ENCODE measurements at regions of chr7 and their contacts with region 1.

Region 1: GRCh38 chr7:136405931-136406777 is 429.0 kb upstream of the MTPN start:
- DNase-seq: peak in 3 of 5 donors; percentile 9 to 29 (median 16)
- ATAC-seq: peak in 3 of 4 donors; percentile 55 to 80 (median 73)
- H3K4me3 ChIP-seq: no peak overlapping the region
- H3K27ac ChIP-seq: no peak overlapping the region
- H3K4me1 ChIP-seq: peaks cover 0 to 5% (median 0%) of the 10 kb centered on the region in 12 donors
- H3K27me3 ChIP-seq: peaks cover 0 to 3% (median 0%) of the 10 kb centered on the region in 9 donors
- CTCF ChIP-seq: peak; percentile 55 to 83 (median 71)
- POLR2A ChIP-seq: no peak

Region 2: DNA sequence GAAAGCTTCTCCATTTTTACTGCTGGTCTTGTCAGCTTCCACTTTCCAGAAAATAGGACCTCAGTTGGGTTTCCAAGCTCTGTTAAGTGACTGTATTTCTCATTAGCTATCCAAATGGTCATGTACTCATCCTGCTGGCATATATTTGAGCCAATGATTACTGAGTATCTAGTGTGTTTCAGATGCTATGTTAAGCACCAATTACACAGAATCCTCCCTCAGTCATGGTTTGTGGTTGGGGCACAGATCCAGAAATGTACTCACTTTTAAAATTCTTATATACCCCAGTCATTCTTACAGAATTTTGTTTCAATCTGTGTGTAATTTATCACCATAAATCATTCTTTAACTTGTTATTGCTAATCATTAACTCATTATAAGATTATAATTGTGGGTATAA is 66.7 kb before region 1 on chr7:
- intact Hi-C with region 1: no loop called
- DNase-seq: no peak
- ATAC-seq: no peak
- H3K4me3 ChIP-seq: no peak overlapping the region
- H3K27ac ChIP-seq: no peak overlapping the region
- H3K4me1 ChIP-seq: no peaks in the 10 kb centered on the region
- H3K27me3 ChIP-seq: no peaks in the 10 kb centered on the region
- CTCF ChIP-seq: no peak
- POLR2A ChIP-seq: no peak

Region 3: GRCh38 chr7:136857573-136857972 is 451.4 kb after region 1 on chr7:
- intact Hi-C with region 1: loop called in 1 of 10 experiments (anchors 5 kb)
- DNase-seq: no peak
- ATAC-seq: no peak
- H3K4me3 ChIP-seq: no peak overlapping the region
- H3K27ac ChIP-seq: no peak overlapping the region
- H3K4me1 ChIP-seq: no peaks in the 10 kb centered on the region
- H3K27me3 ChIP-seq: no peaks in the 10 kb centered on the region
- CTCF ChIP-seq: no peak
- POLR2A ChIP-seq: no peak

Region 4: GRCh38 chr7:137091396-137091795 is 685.2 kb after region 1 on chr7:
- intact Hi-C with region 1: loop called in 1 of 10 experiments (anchors 10 kb)
- DNase-seq: no peak
- ATAC-seq: peak; percentile 47 to 86 (median 77)
- H3K4me3 ChIP-seq: no peak overlapping the region
- H3K27ac ChIP-seq: no peak overlapping the region
- H3K4me1 ChIP-seq: no peaks in the 10 kb centered on the region
- H3K27me3 ChIP-seq: no peaks in the 10 kb centered on the region
- CTCF ChIP-seq: peak in 9 of 12 donors; percentile 13 to 50 (median 33)
- POLR2A ChIP-seq: no peak

Region 5: GRCh38 chr7:137454246-137454724 is 1048.1 kb after region 1 on chr7:
- intact Hi-C with region 1: loop called in 5 of 10 experiments (anchors 5 to 10 kb)
- DNase-seq: no peak
- ATAC-seq: peak in 3 of 4 donors; percentile 54 to 74 (median 66)
- H3K4me3 ChIP-seq: peak overlapping the region in 6 of 12 donors; percentile 13 to 44 (median 20)
- H3K27ac ChIP-seq: peak overlapping the region in 9 of 12 donors; percentile 17 to 75 (median 56)
- H3K4me1 ChIP-seq: peaks cover 0 to 19% (median 6%) of the 10 kb centered on the region in 12 donors
- H3K27me3 ChIP-seq: no peaks in the 10 kb centered on the region
- CTCF ChIP-seq: peak; percentile 53 to 82 (median 66)
- POLR2A ChIP-seq: no peak

Region 6: GRCh38 chr7:137579913-137580640 is 1173.9 kb after region 1 on chr7:
- intact Hi-C with region 1: loop called in 1 of 10 experiments (anchors 10 kb)
- DNase-seq: no peak
- ATAC-seq: peak in 2 of 4 donors; percentile 52 to 74
- H3K4me3 ChIP-seq: no peak overlapping the region
- H3K27ac ChIP-seq: no peak overlapping the region
- H3K4me1 ChIP-seq: peaks cover 0 to 11% (median 0%) of the 10 kb centered on the region in 12 donors
- H3K27me3 ChIP-seq: no peaks in the 10 kb centered on the region
- CTCF ChIP-seq: no peak
- POLR2A ChIP-seq: no peak

Region 7: DNA sequence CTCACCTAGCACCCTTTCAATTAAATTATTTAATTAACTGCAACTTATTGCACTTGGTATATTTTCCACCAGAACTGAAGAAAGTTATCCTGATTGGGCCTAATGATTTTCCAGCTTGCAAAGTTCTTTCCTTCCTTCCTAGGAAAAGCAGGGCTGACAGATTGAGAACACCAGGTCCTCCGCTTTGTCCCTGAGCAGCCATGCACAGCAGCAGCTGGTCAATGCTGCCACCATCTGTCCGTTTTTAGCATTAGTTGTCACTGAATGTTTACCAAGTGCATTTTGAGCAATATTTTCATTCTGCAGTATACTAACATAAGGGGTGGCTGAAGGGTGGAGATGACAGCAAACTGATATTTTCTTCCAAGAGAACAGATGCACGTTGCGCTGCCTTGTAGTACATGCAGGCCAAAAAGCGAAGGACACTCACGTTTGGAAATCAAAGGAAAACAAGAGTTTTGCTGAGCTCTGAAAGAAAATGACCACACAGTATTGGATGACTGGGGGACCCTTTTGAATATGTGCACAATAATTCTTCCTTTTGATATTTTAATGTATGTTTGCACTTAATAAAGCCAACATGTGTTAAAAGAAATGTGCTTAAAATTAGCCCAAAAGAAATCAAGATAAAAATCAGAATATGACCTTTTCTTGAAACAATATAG is 1186.2 kb after region 1 on chr7:
- intact Hi-C with region 1: loop called in 6 of 10 experiments (anchors 5 to 10 kb)
- DNase-seq: peak; percentile 46 to 58 (median 55)
- ATAC-seq: peak in 3 of 4 donors; percentile 80 to 93 (median 82)
- H3K4me3 ChIP-seq: no peak overlapping the region
- H3K27ac ChIP-seq: peak overlapping the region in 1 of 12 donors; percentile 35
- H3K4me1 ChIP-seq: peaks cover 0 to 13% (median 0%) of the 10 kb centered on the region in 12 donors
- H3K27me3 ChIP-seq: no peaks in the 10 kb centered on the region
- CTCF ChIP-seq: peak; percentile 53 to 84 (median 71)
- POLR2A ChIP-seq: no peak

Measured in heart left ventricle (tissue), 16 donors.